ENCODE measurements at regions of chr18 and their contacts with region 1.

Region 1: DNA sequence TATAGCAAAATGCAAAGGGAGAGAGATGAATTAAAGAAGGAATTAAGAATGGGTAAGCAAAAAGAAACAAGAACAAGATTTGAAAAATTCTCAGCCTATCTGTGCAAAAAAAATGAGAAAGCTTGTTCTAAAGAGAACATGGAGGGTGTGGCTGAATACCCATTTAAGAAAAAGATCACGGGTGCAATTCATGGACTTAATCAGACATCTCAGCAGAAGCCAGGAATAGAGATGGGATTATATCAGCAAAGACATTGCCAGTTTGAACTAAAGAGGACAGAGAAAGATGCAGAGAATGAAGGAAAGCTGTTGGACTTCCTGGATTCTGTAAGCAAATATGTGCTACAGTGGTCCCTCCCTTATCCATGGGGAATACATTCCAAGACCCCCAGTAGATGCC is 115.6 kb downstream of the RTTN start:
- DNase-seq: no peak
- ATAC-seq: no peak
- H3K4me3 ChIP-seq: no peak overlapping the region
- H3K27ac ChIP-seq: no peak overlapping the region
- H3K4me1 ChIP-seq: peaks cover 0 to 4% (median 0%) of the 10 kb centered on the region in 12 donors
- H3K27me3 ChIP-seq: no peaks in the 10 kb centered on the region
- CTCF ChIP-seq: no peak
- POLR2A ChIP-seq: no peak

Region 2: GRCh38 chr18:69484699-69485396 is 605.0 kb before region 1 on chr18:
- intact Hi-C with region 1: loop called in 1 of 10 experiments (anchors 10 kb)
- DNase-seq: no peak
- ATAC-seq: no peak
- H3K4me3 ChIP-seq: no peak overlapping the region
- H3K27ac ChIP-seq: no peak overlapping the region
- H3K4me1 ChIP-seq: peaks cover 0 to 2% (median 0%) of the 10 kb centered on the region in 12 donors
- H3K27me3 ChIP-seq: no peaks in the 10 kb centered on the region
- CTCF ChIP-seq: peak in 4 of 12 donors; percentile 13 to 31 (median 21)
- POLR2A ChIP-seq: no peak